ENCODE measurements at regions of chr16 and their contacts with region 1.

Region 1: DNA sequence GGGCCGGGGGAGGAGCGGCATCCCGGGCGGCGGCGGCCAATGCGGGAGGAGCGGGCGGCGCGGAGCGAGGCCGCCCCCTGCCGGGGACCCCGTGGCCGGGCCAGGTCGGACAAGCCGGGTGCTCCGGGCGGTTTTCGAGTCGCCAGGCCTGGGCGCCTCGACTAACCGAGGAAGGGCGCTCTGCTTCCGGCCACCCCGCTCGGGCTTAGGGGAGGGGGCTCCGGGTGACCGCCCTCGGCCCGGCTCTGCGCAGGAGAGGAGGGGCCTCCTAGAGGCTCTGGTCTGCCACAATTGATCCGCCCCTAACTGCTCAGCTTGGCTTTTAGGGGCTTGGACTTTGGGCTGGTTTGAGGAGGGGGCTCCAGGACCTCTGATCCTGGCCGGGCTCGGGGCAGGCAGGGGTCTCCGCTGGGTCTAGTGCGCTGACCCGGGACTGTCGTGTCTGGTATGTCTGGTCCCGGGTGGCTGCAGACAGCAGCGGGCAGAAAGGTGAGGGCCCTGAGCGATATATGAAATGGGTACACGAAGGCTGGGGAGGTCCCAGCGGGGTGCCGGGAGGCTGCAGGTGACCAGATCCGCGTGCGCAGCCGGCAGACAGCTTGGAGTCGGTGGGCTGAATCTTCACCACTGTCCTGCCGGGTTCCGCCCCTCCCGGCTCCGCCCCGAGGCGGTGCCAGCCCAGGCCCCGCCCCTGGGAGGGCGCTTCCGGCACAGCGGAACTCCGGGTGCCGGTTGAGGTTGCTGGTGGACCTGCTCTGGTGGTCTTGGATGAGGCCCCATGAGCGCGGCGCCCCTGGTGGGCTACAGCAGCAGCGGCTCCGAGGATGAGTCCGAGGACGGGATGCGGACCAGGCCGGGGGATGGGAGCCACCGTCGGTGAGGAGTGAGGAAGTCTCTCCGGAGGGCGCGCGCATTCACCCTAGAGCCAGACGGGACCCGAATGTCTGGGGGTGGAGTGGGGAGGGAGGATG is at the start of gene USB1:
- DNase-seq: peak; percentile 89
- ATAC-seq: peak; percentile 79
- H3K4me3 Mint-ChIP-seq: peak within 1 kb of the TSS; percentile 91
- H3K27ac Mint-ChIP-seq: peak within 1 kb of the TSS; percentile 80
- H3K4me1 Mint-ChIP-seq: peaks cover 41% of the 10 kb centered on the region
- H3K27me3 Mint-ChIP-seq: no peaks in the 10 kb centered on the region
- total RNA-seq, gene USB1: 37.3 to 38.5 TPM

Region 2: DNA sequence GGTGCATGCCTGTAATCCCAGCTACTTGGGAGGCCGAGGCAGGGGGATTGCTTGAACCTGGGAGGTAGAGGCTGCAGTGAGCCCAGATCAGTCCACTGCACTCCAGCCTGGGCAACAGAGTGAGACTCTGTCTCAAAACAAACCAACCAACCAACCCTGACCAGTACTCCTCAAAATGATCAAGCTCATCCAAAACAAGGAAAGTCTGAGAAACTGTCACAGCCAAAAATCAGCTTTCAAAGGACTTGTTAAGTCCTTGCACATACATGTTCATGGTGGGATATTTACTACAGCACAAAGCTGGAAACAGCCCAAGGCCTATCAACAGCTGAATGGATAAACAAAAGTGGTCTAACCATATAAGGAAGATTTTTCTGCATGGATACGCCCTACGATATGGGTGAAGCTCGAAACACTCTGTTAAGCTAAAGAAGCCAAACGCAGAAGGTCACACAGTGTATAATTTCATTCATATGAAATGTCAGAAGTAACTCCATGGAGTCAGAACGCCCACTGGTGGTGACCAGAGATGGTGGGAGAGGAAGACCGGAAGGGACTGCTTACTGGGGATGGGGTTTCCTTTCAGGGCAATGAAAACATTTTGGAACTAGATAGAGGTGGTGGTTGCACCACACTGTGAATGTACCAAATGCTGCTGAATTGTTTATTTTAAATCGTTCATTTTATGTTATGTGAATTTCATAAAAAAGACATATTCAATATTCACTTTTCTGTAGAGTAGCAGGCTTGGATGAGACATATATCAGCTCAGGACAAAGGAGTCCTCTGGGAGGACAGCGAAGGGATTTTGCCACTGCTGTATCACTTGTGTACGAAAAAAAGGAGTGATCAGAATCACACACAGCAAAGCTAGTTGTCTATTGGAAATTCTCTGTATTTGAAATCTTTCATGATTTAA is 578.7 kb before region 1 on chr16:
- CTCF ChIA-PET with region 1: no interaction called
- POLR2A ChIA-PET with region 1: no interaction called
- intact Hi-C with region 1: loop called in 1 of 2 experiments (anchors 1 kb)
- DNase-seq: no peak
- ATAC-seq: no peak
- H3K4me3 Mint-ChIP-seq: no peak overlapping the region
- H3K27ac Mint-ChIP-seq: no peak overlapping the region
- H3K4me1 Mint-ChIP-seq: peaks cover 12% of the 10 kb centered on the region
- H3K27me3 Mint-ChIP-seq: no peaks in the 10 kb centered on the region

Region 3: GRCh38 chr16:57591086-57591869 is 409.7 kb before region 1 on chr16:
- CTCF ChIA-PET with region 1: no interaction called
- POLR2A ChIA-PET with region 1: interaction called, 3 read pairs
- intact Hi-C with region 1: loop called in 1 of 2 experiments (anchors 5 kb)
- DNase-seq: peak; percentile 87
- ATAC-seq: peak; percentile 90
- H3K4me3 Mint-ChIP-seq: peak overlapping the region; percentile 60
- H3K27ac Mint-ChIP-seq: peak overlapping the region; percentile 92
- H3K4me1 Mint-ChIP-seq: peaks cover 32% of the 10 kb centered on the region
- H3K27me3 Mint-ChIP-seq: no peaks in the 10 kb centered on the region

Region 4: GRCh38 chr16:57810197-57811031 is 190.6 kb before region 1 on chr16:
- CTCF ChIA-PET with region 1: no interaction called
- POLR2A ChIA-PET with region 1: no interaction called
- intact Hi-C with region 1: loop called (anchors 2 to 10 kb)
- DNase-seq: peak; percentile 87
- ATAC-seq: peak; percentile 97
- H3K4me3 Mint-ChIP-seq: no peak overlapping the region
- H3K27ac Mint-ChIP-seq: peak overlapping the region; percentile 27
- H3K4me1 Mint-ChIP-seq: peaks cover 23% of the 10 kb centered on the region
- H3K27me3 Mint-ChIP-seq: peaks cover 15% of the 10 kb centered on the region

Region 5: DNA sequence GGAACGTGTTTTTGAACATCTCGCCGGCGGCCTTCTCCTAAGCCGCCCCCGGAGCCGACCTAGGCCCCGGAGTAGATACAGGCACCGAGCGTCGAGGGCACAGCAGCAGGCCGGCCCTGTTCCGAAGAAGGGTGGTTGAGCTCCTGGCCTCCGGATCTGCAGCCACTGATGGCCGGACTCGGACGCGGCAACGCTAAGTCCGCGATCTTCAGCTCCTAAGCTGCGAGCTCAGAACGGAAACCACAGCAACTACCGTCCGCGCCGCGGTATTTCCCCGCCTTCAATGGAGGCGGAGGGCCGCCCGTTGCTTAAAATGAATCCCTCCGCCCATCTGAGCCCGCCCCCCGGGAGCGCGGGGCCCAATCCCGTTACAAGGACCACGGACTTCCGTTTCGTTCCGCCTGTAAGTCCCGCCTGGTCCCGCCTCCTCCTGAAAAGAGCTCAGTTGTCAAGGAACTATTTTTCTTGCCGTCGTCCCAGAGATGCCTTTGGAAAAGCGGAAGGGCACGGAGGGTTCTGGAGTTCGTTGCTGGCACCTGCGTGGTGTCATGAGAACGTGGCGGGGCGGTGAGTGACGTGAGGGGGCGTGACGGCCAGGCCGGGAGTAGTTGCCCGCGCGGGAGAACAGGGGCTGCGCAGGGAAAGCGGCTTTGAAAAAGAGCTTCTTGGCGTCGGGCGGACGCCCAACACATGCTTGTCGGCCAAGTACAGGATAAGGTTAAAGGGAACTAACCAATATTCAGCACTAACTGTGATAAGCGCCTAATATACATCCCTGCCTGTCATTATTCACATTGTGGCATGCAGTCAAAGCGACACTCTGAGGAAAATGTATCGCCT is 128.3 kb after region 1 on chr16 and contains the start of gene CFAP20:
- CTCF ChIA-PET with region 1: interaction called, 3 read pairs
- POLR2A ChIA-PET with region 1: interaction called, 3 read pairs
- intact Hi-C with region 1: loop called in 1 of 2 experiments (anchors 1 kb)
- DNase-seq: peak; percentile 98
- ATAC-seq: peak; percentile 94
- H3K4me3 Mint-ChIP-seq: peak within 1 kb of the TSS; percentile 75
- H3K27ac Mint-ChIP-seq: peak within 1 kb of the TSS; percentile 84
- H3K4me1 Mint-ChIP-seq: peaks cover 38% of the 10 kb centered on the region
- H3K27me3 Mint-ChIP-seq: no peaks in the 10 kb centered on the region
- total RNA-seq, gene CFAP20: 45.9 to 48.7 TPM

Region 6: GRCh38 chr16:58629572-58630104 is 628.6 kb after region 1 on chr16 and contains the start of gene CNOT1:
- CTCF ChIA-PET with region 1: no interaction called
- POLR2A ChIA-PET with region 1: no interaction called
- intact Hi-C with region 1: loop called in 1 of 2 experiments (anchors 1 kb)
- DNase-seq: peak; percentile 99
- ATAC-seq: peak; percentile 89
- H3K4me3 Mint-ChIP-seq: peak within 1 kb of the TSS; percentile 100
- H3K27ac Mint-ChIP-seq: peak within 1 kb of the TSS; percentile 100
- H3K4me1 Mint-ChIP-seq: peaks cover 27% of the 10 kb centered on the region
- H3K27me3 Mint-ChIP-seq: no peaks in the 10 kb centered on the region
- total RNA-seq, gene CNOT1: 265 to 348 TPM

Measured in activated CD4-positive, alpha-beta T cell treated with anti-CD3 and anti-CD28 coated beads for 36 hours (primary cell).